GM13976 (cell line): ENCODE measurements at regions of chr12 and their contacts with region 1.

Region 1: GRCh38 chr12:59149997-59150642 is 229.8 kb upstream of the LRIG3 start:
- DNase-seq: peak; percentile 16
- CTCF ChIP-seq: peak; percentile 83

Region 2: DNA sequence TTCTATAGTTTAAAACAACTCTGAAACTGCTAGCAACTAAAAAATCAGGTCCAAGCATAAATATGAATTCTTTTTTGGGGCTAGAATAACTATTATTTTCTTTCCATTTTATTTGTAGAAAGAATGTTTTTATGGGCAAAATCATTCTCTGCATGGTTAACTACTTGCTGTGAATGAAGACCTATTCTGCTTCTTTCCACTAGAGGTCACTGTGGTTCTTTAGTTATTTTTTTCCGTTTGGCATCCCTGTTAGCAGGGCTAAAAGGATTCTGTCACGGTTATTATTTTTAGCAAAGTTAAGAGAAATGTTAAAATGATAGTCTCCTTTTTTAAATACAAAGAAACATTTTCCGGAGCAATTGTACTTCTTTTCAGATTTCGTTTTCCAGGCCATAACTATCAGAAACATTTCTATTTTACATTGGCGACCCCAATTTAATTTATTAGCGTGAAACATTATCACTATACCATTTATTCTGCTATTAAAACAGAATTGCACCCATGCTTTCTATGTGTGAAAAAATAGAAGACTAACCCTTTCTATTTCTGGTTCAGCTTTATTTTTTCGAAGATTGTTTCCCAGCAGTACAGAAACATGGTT is 804.0 kb before region 1 on chr12:
- in situ Hi-C with region 1: loop called (anchors 25 kb)
- DNase-seq: peak; percentile 18
- CTCF ChIP-seq: peak; percentile 51